Activated naive CD4-positive, alpha-beta T cell treated with anti-CD3 and anti-CD28 coated beads, Interleukin-2, amount 10 ng/mL, durations not matched to agents 7 days and 5 days (primary cell): ENCODE measurements at regions of chr10 and their contacts with region 1.

Region 1: DNA sequence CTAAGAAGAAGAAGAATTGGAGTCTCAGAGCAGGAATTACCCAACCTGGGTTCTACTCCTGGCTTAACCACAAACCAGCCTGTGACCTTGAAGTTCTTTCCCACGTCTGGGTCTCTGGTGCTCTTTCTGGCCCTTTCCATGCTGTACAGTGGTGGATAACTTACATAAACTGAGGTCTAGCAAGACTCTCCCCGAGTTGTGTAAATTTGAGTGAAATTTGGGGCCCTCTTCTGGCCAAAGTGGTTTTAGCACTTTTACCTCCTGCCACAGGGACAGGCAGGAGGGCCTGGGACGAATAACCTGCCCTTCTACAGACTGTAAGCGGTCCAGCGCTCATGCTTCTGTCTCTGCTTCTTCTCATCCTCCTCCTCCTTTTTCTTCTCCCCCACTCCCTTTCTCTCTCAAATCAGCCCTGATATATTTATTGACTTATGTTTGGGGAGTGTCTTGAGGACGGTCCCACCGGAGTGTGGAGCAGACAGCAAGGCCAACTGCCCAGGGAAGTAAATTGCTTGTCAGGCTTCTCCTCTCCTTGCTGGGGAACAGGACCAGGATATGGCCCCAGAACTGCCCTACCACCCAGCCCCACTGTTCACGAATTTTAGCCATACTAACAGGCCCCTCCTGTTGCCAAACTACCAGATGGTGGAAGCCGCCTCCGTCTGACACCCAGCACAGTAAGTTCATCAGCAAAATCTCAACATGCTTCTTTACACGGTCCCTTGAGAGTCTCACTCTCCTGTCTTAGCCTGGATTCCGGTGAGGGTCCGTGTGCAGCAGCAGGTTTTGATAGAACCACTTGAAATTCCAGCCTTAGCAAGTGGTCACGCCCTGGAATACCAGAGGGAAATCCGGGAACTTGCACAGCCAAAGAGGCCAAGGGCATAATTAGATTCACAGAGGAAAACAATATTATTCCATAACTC is 4.0 kb upstream of the SH3PXD2A start:
- DNase-seq: peak; percentile 73
- H3K4me3 Mint-ChIP-seq: no peak overlapping the region
- H3K27ac Mint-ChIP-seq: no peak overlapping the region
- H3K4me1 Mint-ChIP-seq: peaks cover 11% of the 10 kb centered on the region
- H3K27me3 Mint-ChIP-seq: peaks cover 59% of the 10 kb centered on the region

Region 2: DNA sequence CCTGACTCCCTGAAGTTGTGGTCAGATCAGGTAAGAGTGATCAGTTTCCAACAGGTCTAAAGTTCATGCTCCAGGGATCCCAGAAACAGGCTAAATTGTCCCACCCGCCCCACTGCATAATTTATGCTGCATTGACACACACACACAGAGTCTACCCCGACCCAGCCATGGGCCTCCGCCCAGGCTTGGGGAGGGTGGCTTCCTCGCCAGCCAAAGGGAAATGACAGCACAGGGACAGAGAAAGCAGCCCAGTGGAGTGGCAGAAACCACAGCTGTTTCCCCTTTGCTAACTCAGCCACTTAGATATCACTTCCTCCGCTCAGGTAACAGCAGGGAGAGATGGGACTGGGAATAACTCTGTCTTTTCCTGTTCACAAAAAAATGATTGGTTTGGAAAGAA is 13.5 kb before region 1 on chr10:
- CTCF ChIA-PET with region 1: interaction called, 17 read pairs
- DNase-seq: peak; percentile 68
- H3K4me3 Mint-ChIP-seq: no peak overlapping the region
- H3K27ac Mint-ChIP-seq: peak overlapping the region; percentile 84
- H3K4me1 Mint-ChIP-seq: peaks cover 28% of the 10 kb centered on the region
- H3K27me3 Mint-ChIP-seq: peaks cover 46% of the 10 kb centered on the region